Caco-2 (cell line): ENCODE measurements at regions of chr17 and their contacts with region 1.

Region 1: DNA sequence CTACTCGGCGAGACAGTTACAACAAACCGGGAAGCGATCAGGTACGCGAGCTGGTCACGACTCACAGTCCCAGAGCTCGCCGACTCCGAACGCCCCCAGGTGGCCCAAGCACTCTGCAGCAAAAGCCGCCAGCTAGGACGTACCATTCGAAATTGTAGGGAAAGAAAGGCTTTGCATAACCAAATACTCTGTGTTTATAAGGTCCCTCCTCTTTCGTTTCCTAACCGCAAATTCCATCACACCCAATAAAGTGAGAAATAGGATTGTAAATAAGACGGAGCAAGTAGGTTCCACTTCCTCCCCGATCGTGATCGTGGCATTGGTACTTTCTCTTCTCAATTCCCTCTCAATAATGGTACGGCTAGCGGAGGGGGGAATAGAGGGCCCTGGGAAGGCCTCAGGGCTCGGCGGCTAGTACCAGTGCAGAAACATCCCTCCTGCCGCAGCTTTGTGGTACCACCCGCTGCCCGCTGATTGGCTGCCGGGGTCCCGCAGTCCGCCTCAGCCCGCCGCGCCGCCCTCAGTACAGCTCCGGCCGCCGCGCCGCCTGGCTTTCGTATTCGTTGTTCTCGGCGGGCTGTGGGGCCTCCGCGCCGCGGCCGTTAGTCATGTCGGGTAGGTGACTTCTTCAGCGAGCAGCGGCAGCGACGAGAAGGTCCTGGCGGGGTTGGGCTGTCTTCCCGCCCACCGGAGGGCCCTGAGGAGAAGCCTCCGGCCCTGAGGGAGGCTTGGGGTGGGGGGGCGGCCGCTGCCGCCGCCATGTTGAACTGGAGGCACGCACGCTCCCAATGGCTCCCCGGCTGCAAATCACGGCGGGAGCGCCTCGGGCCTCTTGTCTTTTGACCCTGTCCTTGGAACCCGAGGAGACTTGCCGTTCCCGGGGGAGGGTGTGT is at the start of gene TAF15:
- DNase-seq: peak; percentile 99
- H3K4me3 ChIP-seq: peak within 1 kb of the TSS; percentile 97
- H3K4me3 Mint-ChIP-seq: peak within 1 kb of the TSS; percentile 92
- H3K27ac Mint-ChIP-seq: peak within 1 kb of the TSS; percentile 99
- H3K4me1 ChIP-seq: peaks cover 12% of the 10 kb centered on the region; the same call in 1 of the 2 replicates
- H3K4me1 Mint-ChIP-seq: peaks cover 16% of the 10 kb centered on the region
- H3K27me3 ChIP-seq: no peaks in the 10 kb centered on the region
- H3K27me3 Mint-ChIP-seq: no peaks in the 10 kb centered on the region
- CTCF ChIP-seq: peak; percentile 69 to 95
- total RNA-seq, gene TAF15: 335 and 350 TPM in 2 replicates

Region 2: DNA sequence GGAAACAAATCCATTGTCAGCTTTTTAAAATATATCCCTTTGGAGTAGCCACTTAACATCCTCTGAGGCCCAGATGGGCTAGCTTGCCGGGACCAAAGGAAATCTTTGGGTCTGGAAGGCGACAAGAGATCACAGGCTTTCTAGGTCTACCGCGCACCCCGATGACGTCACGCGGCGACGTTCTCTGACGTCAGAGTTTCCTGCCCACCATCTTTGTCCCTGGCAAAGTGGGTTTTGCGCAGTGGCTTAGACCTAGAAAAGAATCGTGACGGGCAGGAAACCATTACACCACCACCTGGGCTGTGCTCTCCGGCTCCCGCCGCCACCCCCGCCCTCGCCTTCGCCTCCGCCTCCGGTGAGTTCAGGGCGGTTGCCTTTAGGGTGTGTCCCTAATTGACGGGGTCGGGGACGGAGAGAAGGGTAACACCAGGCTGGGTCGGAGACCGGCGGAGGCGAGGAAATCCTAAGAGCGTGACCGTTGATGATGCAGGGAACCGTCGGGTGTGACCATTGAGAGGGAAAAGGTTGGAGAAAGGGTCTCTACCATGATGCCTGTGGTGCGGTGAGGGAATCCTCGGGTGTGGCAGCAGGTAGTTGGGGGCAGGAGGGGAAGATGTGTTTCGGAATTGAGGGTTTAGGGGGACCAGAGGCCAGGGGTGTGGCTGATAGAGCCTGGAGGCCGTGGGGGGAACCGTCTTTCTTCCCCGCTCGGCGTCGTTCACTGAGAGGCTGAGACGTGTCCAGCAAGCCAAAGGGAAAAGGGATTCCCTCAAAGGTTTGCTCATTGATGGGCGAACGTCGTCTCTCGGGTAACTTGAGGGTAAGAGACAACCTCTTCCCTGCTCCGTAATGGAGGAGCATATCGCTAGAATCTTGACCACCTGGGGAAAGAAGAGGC is 221.9 kb before region 1 on chr17 and contains the start of gene AP2B1:
- CTCF ChIA-PET with region 1: no interaction called
- POLR2A ChIA-PET with region 1: no interaction called
- intact Hi-C with region 1: loop called (anchors 2 kb)
- DNase-seq: peak; percentile 96 to 97
- H3K4me3 ChIP-seq: peak within 1 kb of the TSS; percentile 77
- H3K4me3 Mint-ChIP-seq: peak within 1 kb of the TSS; percentile 90
- H3K27ac Mint-ChIP-seq: peak within 1 kb of the TSS; percentile 96
- H3K4me1 ChIP-seq: peaks cover 21% of the 10 kb centered on the region
- H3K4me1 Mint-ChIP-seq: peaks cover 13% of the 10 kb centered on the region
- H3K27me3 ChIP-seq: no peaks in the 10 kb centered on the region
- H3K27me3 Mint-ChIP-seq: no peaks in the 10 kb centered on the region
- CTCF ChIP-seq: no peak
- total RNA-seq, gene AP2B1: 221 and 228 TPM in 2 replicates

Region 3: DNA sequence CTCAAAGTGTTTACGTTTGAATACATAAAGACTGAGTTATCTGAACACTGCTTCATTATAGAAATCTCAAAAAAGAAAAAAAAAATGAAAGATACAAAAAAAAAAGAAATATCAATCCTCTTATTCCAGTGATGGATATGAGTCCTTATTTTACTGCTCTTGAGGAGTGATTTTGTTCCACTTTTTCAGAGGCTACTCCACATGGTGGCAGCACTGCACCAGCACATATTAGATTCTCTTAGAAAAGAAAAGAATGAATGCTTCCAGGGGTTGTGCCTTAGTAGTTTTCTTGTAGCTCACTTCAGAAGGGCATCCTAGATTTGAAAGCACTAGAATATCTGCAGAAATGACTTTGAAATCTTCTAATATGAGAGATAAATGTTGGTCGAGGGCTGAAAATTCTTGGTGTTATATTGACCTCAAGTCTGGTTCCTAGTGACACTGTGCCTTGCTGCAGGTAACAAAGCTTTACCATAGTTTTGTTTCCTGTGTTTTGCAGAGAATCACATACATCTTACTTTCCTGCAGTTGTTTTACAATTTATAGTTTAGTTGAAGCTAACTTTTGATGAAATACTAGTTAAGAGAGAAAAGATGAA is 196.2 kb before region 1 on chr17:
- CTCF ChIA-PET with region 1: interaction called, 3 read pairs
- POLR2A ChIA-PET with region 1: no interaction called
- intact Hi-C with region 1: loop called (anchors 2 kb)
- DNase-seq: peak in 1 of 2 experiments; percentile 67
- H3K4me3 ChIP-seq: no peak overlapping the region
- H3K4me3 Mint-ChIP-seq: no peak overlapping the region
- H3K27ac Mint-ChIP-seq: no peak overlapping the region
- H3K4me1 ChIP-seq: no peaks in the 10 kb centered on the region; the same call in 1 of the 2 replicates
- H3K4me1 Mint-ChIP-seq: no peaks in the 10 kb centered on the region
- H3K27me3 ChIP-seq: no peaks in the 10 kb centered on the region
- H3K27me3 Mint-ChIP-seq: no peaks in the 10 kb centered on the region
- CTCF ChIP-seq: peak; percentile 78 to 79

Region 4: GRCh38 chr17:35774499-35774898 is 34.7 kb before region 1 on chr17:
- CTCF ChIA-PET with region 1: interaction called, 10 read pairs
- POLR2A ChIA-PET with region 1: no interaction called
- intact Hi-C with region 1: no loop called
- DNase-seq: no peak
- H3K4me3 ChIP-seq: no peak overlapping the region
- H3K4me3 Mint-ChIP-seq: no peak overlapping the region
- H3K27ac Mint-ChIP-seq: no peak overlapping the region
- H3K4me1 ChIP-seq: no peaks in the 10 kb centered on the region
- H3K4me1 Mint-ChIP-seq: peaks cover 7% of the 10 kb centered on the region
- H3K27me3 ChIP-seq: no peaks in the 10 kb centered on the region
- H3K27me3 Mint-ChIP-seq: peaks cover 8% of the 10 kb centered on the region
- CTCF ChIP-seq: no peak

Region 5: DNA sequence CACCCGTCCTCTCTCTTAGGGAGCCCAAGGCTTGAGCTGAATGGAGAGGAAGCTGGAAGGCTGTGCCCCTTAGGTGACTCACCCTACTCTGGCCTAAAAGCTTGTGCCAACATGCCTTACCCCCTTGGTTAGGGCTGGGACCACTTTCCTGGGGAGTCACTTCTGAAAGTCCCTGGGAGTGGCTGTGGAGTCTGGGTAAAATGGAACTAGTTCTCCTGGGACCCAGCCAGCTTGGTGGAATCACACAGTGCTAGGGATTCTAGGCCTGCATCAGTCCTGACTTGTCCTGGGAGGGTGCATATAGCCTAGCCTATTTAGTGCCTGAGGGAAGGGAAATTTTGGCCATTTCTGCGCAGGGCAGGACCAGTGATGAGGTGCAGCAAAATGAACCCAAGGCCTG is 24.3 kb before region 1 on chr17:
- CTCF ChIA-PET with region 1: interaction called, 10 read pairs
- POLR2A ChIA-PET with region 1: interaction called, 4 read pairs
- intact Hi-C with region 1: no loop called
- DNase-seq: no peak
- H3K4me3 ChIP-seq: no peak overlapping the region
- H3K4me3 Mint-ChIP-seq: no peak overlapping the region
- H3K27ac Mint-ChIP-seq: no peak overlapping the region
- H3K4me1 ChIP-seq: no peaks in the 10 kb centered on the region
- H3K4me1 Mint-ChIP-seq: peaks cover 15% of the 10 kb centered on the region
- H3K27me3 ChIP-seq: no peaks in the 10 kb centered on the region
- H3K27me3 Mint-ChIP-seq: peaks cover 5% of the 10 kb centered on the region
- CTCF ChIP-seq: no peak